GM10248 (cell line): ENCODE measurements at regions of chr15 and their contacts with region 1.

Region 1: GRCh38 chr15:68817304-68818065 is 3.2 kb downstream of the ANP32A start:
- DNase-seq: peak; percentile 71
- CTCF ChIP-seq: no peak

Region 2: DNA sequence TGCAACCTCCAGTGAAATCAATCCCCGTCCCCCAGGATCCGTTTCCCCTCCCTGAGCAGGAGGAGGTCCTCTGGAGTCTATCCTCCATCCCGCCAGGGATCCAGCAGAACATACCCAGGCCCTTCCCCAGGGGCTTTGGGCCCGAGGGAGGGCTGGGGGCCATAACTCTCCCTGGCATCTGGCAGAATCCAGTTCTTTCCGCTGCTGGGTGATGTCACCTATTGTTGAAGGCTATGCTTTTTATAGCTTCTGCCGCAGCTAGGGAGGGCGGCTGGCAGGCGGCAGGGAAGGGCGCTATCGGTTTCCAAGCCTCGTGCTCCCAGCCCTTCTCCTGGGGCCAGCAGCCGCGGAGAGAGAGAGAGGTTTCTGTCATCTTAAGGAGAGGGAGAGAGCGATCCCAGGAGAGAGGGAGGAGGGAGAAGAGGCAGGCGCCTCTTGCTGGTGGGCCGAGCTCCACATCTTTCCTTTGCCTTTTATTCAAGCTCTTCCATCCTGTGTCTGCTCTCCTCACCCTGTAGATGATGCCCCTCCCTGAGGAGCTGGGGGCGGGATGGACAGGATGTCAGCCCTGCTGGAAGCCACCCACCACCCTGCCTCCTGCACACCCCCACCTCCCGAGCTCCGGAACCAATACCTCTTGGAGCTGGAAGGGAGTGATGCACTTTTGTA is 116.9 kb before region 1 on chr15:
- CTCF ChIA-PET with region 1: no interaction called
- POLR2A ChIA-PET with region 1: no interaction called
- DNase-seq: no peak
- CTCF ChIP-seq: no peak

Region 3: GRCh38 chr15:68806220-68807060 is 11.0 kb before region 1 on chr15:
- CTCF ChIA-PET with region 1: interaction called, 14 read pairs
- POLR2A ChIA-PET with region 1: no interaction called
- DNase-seq: no peak
- CTCF ChIP-seq: no peak